MCF 10A (cell line): ENCODE measurements at regions of chr12 and their contacts with region 1.

Region 1: DNA sequence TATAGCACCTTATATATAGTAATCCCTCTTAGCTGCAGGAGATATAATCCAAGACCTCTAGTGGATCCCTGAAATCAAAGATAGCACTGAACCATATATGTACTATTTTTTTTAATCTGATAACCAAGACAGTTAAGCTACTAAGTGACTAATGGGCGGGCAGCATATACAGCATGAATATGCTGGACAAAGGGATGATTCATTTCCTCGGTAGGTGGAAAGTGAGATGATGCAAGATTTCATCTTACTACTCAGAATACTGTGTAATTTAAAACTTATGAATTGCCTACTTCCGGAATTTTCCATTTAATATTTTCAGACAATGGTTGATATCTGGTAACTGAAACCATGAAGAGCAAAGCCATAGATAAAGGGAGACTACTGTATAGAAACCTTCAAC is 36.2 kb downstream of the PRMT8 start:
- DNase-seq: peak; percentile 83
- H3K4me3 Mint-ChIP-seq: no peak overlapping the region
- H3K27ac Mint-ChIP-seq: peak overlapping the region; percentile 46
- H3K4me1 Mint-ChIP-seq: no peaks in the 10 kb centered on the region
- H3K27me3 Mint-ChIP-seq: no peaks in the 10 kb centered on the region
- CTCF ChIP-seq: no peak

Region 2: GRCh38 chr12:3342056-3342455 is 185.1 kb before region 1 on chr12:
- CTCF ChIA-PET with region 1: interaction called, 3 read pairs
- POLR2A ChIA-PET with region 1: no interaction called
- intact Hi-C with region 1: loop called (anchors 10 kb)
- DNase-seq: peak; percentile 10
- H3K4me3 Mint-ChIP-seq: no peak overlapping the region
- H3K27ac Mint-ChIP-seq: no peak overlapping the region
- H3K4me1 Mint-ChIP-seq: peaks cover 7% of the 10 kb centered on the region
- H3K27me3 Mint-ChIP-seq: no peaks in the 10 kb centered on the region
- CTCF ChIP-seq: peak; percentile 19